ENCODE measurements at regions of chr22 and their contacts with region 1.

Region 1: GRCh38 chr22:20550821-20551744 is 43.7 kb downstream of the MED15 start:
- DNase-seq: peak in 1 of 2 donors; percentile 85
- H3K4me3 ChIP-seq: peak overlapping the region in 1 of 2 donors; percentile 23
- H3K27ac ChIP-seq: peak overlapping the region; percentile 95 to 98
- H3K4me1 ChIP-seq: peaks cover 35 to 65% of the 10 kb centered on the region in 2 donors
- H3K27me3 ChIP-seq: no peaks in the 10 kb centered on the region
- CTCF ChIP-seq: no peak

Region 2: GRCh38 chr22:20531315-20532201 is 19.5 kb before region 1 on chr22:
- intact Hi-C with region 1: loop called (anchors 1 kb)
- DNase-seq: peak; percentile 19 to 85
- H3K4me3 ChIP-seq: peak overlapping the region in 1 of 2 donors; percentile 29
- H3K27ac ChIP-seq: peak overlapping the region; percentile 86 to 94
- H3K4me1 ChIP-seq: peaks cover 29 to 44% of the 10 kb centered on the region in 2 donors
- H3K27me3 ChIP-seq: no peaks in the 10 kb centered on the region
- CTCF ChIP-seq: no peak

Region 3: DNA sequence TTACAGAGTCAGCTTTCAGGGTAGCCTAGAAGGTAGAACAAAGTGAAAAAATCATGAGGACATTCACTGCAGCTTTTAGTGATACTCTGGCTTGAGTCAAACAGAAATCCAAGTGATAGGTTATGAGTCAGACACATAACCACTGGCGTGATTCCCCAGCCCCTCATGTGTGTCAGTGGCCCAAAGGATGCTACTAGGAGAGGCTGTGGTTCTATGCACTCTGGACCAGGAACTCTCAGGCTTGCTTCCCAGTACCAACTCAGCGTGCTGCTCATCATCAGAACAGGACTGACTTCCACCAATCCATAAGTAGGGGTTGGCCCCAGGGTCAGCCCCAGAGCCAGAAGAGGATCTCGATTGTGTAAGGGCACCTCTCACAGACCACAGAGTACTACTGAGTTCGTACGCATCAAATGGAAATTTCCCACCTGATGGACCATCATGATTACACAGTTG is 73.1 kb after region 1 on chr22:
- intact Hi-C with region 1: no loop called
- DNase-seq: no peak
- H3K4me3 ChIP-seq: no peak overlapping the region
- H3K27ac ChIP-seq: no peak overlapping the region
- H3K4me1 ChIP-seq: no peaks in the 10 kb centered on the region
- H3K27me3 ChIP-seq: no peaks in the 10 kb centered on the region
- CTCF ChIP-seq: no peak

Measured in ascending aorta (tissue), 2 donors.